Endothelial cell of umbilical vein (primary cell): ENCODE measurements at regions of chr4 and their contacts with region 1.

Region 1: GRCh38 chr4:140116442-140117104 is 37.4 kb downstream of the MAML3 start:
- DNase-seq: peak; percentile 62
- H3K4me3 ChIP-seq: no peak overlapping the region
- H3K27ac ChIP-seq: peak overlapping the region; percentile 18
- H3K4me1 ChIP-seq: peaks cover 16% of the 10 kb centered on the region
- H3K27me3 ChIP-seq: no peaks in the 10 kb centered on the region
- CTCF ChIP-seq: no peak
- POLR2A ChIP-seq: no peak

Region 2: GRCh38 chr4:140130677-140131076 is 14.1 kb after region 1 on chr4:
- CTCF ChIA-PET with region 1: interaction called, 6 read pairs
- POLR2A ChIA-PET with region 1: no interaction called
- dilution Hi-C with region 1: no loop called
- intact Hi-C with region 1: loop called (anchors 2 kb)
- DNase-seq: no peak
- H3K4me3 ChIP-seq: no peak overlapping the region
- H3K27ac ChIP-seq: no peak overlapping the region
- H3K4me1 ChIP-seq: peaks cover 8% of the 10 kb centered on the region
- H3K27me3 ChIP-seq: no peaks in the 10 kb centered on the region
- CTCF ChIP-seq: no peak
- POLR2A ChIP-seq: no peak

Region 3: DNA sequence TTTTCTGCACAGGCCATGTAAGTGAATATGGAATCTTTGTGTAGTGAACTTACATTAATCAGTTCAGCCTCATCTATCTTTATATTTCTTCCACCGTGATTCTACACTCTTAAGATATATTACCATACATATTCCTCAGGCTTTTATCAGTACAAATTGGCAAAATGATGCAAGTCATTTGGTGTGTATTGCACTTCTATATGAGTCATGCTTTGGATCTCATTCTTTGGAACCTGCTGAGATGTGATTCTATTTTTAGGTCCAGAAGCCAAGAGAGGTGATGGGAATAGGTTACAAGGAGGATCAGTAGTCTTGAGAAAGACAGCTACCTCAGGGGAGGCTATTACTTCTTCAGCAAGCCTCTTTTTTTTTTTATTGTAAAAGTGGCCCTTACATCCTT is 1308.6 kb after region 1 on chr4:
- CTCF ChIA-PET with region 1: no interaction called
- POLR2A ChIA-PET with region 1: no interaction called
- dilution Hi-C with region 1: no loop called
- intact Hi-C with region 1: no loop called
- DNase-seq: no peak
- H3K4me3 ChIP-seq: no peak overlapping the region
- H3K27ac ChIP-seq: no peak overlapping the region
- H3K4me1 ChIP-seq: no peaks in the 10 kb centered on the region
- H3K27me3 ChIP-seq: no peaks in the 10 kb centered on the region
- CTCF ChIP-seq: no peak
- POLR2A ChIP-seq: no peak